Activated CD8-positive, alpha-beta T cell treated with anti-CD3 and anti-CD28 coated beads, Interleukin-2, amount 10 ng/mL, durations not matched to agents 7 days and 5 days (primary cell): ENCODE measurements at regions of chr18 and their contacts with region 1.

Region 1: GRCh38 chr18:35290073-35290735 is at the start of gene ZSCAN30:
- DNase-seq: peak; percentile 97
- ATAC-seq: peak; percentile 98
- H3K4me3 Mint-ChIP-seq: peak within 1 kb of the TSS; percentile 98
- H3K27ac Mint-ChIP-seq: peak within 1 kb of the TSS; percentile 97
- H3K4me1 Mint-ChIP-seq: peaks cover 41% of the 10 kb centered on the region
- H3K27me3 Mint-ChIP-seq: no peaks in the 10 kb centered on the region
- total RNA-seq, gene ZSCAN30: 16.0 to 18.3 TPM

Region 2: GRCh38 chr18:35240664-35241447 is 49.3 kb before region 1 on chr18 and contains the start of gene ZNF397:
- CTCF ChIA-PET with region 1: interaction called, 5 read pairs
- POLR2A ChIA-PET with region 1: interaction called, 28 read pairs
- DNase-seq: peak; percentile 96
- ATAC-seq: peak; percentile 99
- H3K4me3 Mint-ChIP-seq: peak within 1 kb of the TSS; percentile 87
- H3K27ac Mint-ChIP-seq: peak within 1 kb of the TSS; percentile 94
- H3K4me1 Mint-ChIP-seq: peaks cover 8% of the 10 kb centered on the region
- H3K27me3 Mint-ChIP-seq: no peaks in the 10 kb centered on the region
- total RNA-seq, gene ZNF397: 11.3 to 12.7 TPM

Region 3: DNA sequence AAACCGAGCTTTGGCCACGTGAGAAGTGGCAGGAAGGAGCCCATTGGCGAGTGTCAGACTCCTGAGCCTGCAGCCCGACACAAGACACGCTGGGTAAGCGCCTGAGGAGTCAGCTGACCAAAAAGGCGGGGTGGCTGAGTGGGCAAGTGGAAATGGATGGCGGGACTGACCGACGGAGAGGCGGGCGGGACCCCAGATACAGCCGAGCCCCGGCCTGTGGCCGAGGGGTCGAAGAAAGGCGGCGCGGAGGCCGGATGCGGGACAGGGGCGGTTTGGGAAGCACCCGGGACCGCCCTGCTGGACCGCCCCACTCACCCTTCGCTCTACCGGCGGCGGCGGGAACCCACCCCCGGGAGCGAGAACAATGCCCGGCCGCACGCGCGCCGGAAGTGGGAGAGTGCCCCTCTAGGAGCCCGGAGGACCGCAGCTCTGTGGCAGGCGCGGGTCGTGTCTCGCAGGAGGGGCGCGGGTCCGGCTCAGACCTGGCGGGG is 23.0 kb before region 1 on chr18:
- CTCF ChIA-PET with region 1: no interaction called
- POLR2A ChIA-PET with region 1: interaction called, 11 read pairs
- DNase-seq: peak; percentile 53
- ATAC-seq: peak; percentile 68
- H3K4me3 Mint-ChIP-seq: peak overlapping the region; percentile 80
- H3K27ac Mint-ChIP-seq: peak overlapping the region; percentile 91
- H3K4me1 Mint-ChIP-seq: peaks cover 21% of the 10 kb centered on the region
- H3K27me3 Mint-ChIP-seq: no peaks in the 10 kb centered on the region

Region 4: GRCh38 chr18:35343936-35344735 is 53.9 kb after region 1 on chr18 and contains the start of gene ZNF24:
- CTCF ChIA-PET with region 1: interaction called, 3 read pairs
- POLR2A ChIA-PET with region 1: interaction called, 17 read pairs
- DNase-seq: peak; percentile 95
- ATAC-seq: peak; percentile 85
- H3K4me3 Mint-ChIP-seq: peak within 1 kb of the TSS; percentile 85
- H3K27ac Mint-ChIP-seq: peak within 1 kb of the TSS; percentile 89
- H3K4me1 Mint-ChIP-seq: peaks cover 35% of the 10 kb centered on the region
- H3K27me3 Mint-ChIP-seq: no peaks in the 10 kb centered on the region
- total RNA-seq, gene ZNF24: 48.8 to 53.2 TPM